Endothelial cell of umbilical vein (primary cell): ENCODE measurements at regions of chr16 and their contacts with region 1.

Region 1: GRCh38 chr16:30429678-30430427 is at the start of gene DCTPP1:
- DNase-seq: peak; percentile 97
- H3K4me3 ChIP-seq: peak within 1 kb of the TSS; percentile 40 to 73 (median 63)
- H3K27ac ChIP-seq: peak within 1 kb of the TSS; percentile 38
- H3K4me1 ChIP-seq: peaks cover 23% of the 10 kb centered on the region
- H3K27me3 ChIP-seq: peaks cover 0 to 4% of the 10 kb centered on the region in 2 experiments
- CTCF ChIP-seq: peak; percentile 66 to 78
- POLR2A ChIP-seq: peak; percentile 25
- total RNA-seq, gene DCTPP1: 65.2 and 68.0 TPM in 2 replicates

Region 2: DNA sequence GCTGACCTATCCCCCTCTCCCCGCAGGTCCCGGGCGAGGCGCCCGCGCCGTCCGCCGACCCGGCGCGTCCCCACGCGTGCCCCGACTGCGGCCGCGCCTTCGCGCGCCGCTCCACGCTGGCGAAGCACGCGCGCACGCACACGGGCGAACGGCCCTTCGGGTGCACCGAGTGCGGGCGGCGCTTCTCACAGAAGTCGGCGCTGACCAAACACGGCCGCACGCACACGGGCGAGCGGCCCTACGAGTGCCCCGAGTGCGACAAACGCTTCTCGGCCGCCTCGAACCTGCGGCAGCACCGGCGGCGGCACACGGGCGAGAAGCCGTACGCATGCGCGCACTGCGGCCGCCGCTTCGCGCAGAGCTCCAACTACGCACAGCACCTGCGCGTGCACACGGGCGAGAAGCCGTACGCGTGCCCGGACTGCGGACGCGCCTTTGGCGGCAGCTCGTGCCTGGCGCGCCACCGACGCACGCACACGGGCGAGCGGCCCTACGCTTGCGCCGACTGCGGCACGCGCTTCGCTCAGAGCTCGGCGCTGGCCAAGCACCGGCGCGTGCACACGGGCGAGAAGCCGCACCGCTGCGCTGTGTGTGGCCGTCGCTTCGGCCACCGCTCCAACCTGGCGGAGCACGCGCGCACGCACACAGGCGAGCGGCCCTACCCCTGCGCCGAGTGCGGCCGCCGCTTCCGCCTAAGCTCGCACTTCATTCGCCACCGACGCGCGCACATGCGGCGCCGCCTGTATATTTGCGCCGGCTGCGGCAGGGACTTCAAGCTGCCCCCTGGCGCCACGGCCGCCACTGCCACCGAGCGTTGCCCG is 12.1 kb before region 1 on chr16:
- CTCF ChIA-PET with region 1: interaction called, 46 read pairs
- POLR2A ChIA-PET with region 1: interaction called, 12 read pairs
- dilution Hi-C with region 1: no loop called
- intact Hi-C with region 1: no loop called
- DNase-seq: peak; percentile 96
- H3K4me3 ChIP-seq: peak overlapping the region in 2 of 3 experiments; percentile 44 to 57
- H3K27ac ChIP-seq: no peak overlapping the region
- H3K4me1 ChIP-seq: peaks cover 3% of the 10 kb centered on the region
- H3K27me3 ChIP-seq: no peaks in the 10 kb centered on the region
- CTCF ChIP-seq: peak in 1 of 2 donors; percentile 37
- POLR2A ChIP-seq: peak; percentile 42

Region 3: DNA sequence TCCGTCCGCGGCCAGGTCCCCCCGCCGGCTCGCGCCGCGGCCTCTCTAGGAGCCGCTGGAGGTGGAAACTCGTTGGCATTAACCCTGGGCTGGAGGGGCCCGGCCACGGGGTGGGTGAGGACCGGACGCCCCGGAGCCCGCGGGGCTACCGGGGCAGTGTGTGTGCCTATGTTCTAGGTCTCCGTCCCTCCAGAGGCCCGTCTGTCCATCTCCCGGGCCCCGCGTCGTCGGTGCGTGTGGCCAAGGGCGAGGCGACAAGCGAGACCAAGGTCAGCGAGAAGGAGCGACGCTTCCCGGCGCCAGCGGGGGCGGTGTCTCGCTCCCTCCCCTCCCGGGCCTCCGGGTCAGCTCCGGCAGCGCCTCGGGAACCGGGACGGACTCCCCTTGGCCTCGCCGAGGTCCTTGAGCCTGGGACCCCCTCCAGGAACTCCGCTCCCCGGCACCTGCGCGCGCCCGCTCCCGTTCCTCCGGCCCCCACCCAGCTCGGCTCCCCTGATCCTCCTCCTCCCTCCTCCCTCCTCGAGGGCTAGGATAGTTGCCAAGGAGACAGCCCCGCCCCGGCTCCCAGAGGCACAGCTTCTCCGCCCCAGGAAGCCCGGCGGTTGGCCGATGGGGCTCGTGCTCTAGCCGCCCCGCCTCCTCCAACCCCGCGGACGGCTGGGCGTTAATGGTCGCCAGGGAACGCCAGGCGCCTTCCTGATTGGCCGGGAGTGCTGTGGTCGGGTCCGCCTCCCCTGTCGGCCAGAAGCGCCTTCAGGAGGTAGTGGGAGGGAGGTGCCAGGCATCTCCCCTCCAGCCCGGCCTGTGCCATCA is 97.2 kb after region 1 on chr16:
- CTCF ChIA-PET with region 1: interaction called, 8 read pairs
- POLR2A ChIA-PET with region 1: no interaction called
- dilution Hi-C with region 1: no loop called
- intact Hi-C with region 1: loop called (anchors 1 kb)
- DNase-seq: peak; percentile 98
- H3K4me3 ChIP-seq: peak overlapping the region; percentile 58 to 67 (median 65)
- H3K27ac ChIP-seq: peak overlapping the region; percentile 80
- H3K4me1 ChIP-seq: peaks cover 4% of the 10 kb centered on the region
- H3K27me3 ChIP-seq: no peaks in the 10 kb centered on the region
- CTCF ChIP-seq: peak; percentile 13 to 56
- POLR2A ChIP-seq: peak; percentile 58

Region 4: GRCh38 chr16:30557957-30558788 is 128.3 kb after region 1 on chr16 and contains the start of gene ZNF764:
- CTCF ChIA-PET with region 1: interaction called, 11 read pairs
- POLR2A ChIA-PET with region 1: interaction called, 4 read pairs
- dilution Hi-C with region 1: no loop called
- intact Hi-C with region 1: no loop called
- DNase-seq: peak; percentile 98
- H3K4me3 ChIP-seq: peak within 1 kb of the TSS; percentile 67 to 89 (median 75)
- H3K27ac ChIP-seq: peak within 1 kb of the TSS; percentile 83
- H3K4me1 ChIP-seq: peaks cover 12% of the 10 kb centered on the region
- H3K27me3 ChIP-seq: no peaks in the 10 kb centered on the region
- CTCF ChIP-seq: no peak
- POLR2A ChIP-seq: peak; percentile 93
- total RNA-seq, gene ZNF764: 10.7 and 12.1 TPM in 2 replicates

Region 5: DNA sequence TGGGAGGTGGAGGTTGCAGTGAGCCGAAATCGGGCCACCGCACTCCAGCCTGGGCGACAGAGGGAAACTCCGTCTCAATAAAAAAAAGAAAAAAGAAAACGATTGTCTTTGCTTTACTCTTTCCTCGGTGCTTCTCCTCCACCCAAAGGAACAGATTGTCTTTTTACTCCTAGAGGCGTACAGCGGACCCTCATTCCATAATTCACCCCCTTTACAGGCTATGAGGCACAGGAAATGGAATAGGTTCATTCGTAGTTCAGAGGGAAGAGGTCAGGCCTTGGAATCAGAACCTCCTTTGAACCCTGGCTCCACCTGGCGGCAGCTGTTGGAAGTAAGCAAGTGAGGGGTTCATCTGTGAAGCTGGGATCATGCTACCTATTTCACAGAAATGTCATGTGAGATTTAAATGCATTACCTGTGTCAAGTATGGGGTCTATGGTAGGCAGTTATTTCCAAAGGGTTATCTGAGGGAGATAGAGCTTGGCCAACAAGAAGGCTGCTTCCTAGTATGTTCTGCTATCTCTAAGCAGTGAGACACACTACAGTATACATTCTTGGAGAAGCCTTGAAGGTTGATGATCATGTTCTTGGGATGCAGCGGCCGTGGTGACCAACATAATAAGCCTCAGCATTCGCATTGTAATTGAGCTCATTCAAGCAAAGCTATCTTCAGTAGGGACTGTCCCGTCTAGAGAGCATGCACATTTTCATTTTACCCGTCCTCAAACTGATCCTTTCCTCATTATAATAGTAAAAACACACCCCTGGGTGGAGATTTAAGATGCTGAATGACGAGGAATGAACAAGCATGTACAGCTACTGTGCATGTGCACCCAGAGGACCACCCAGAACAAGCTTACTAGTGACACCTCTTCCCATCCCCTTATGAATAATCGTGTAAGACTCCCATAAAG is 199.0 kb after region 1 on chr16:
- CTCF ChIA-PET with region 1: interaction called, 9 read pairs
- POLR2A ChIA-PET with region 1: no interaction called
- dilution Hi-C with region 1: no loop called
- intact Hi-C with region 1: loop called (anchors 1 kb)
- DNase-seq: peak; percentile 77
- H3K4me3 ChIP-seq: peak overlapping the region in 1 of 3 experiments; percentile 27
- H3K27ac ChIP-seq: no peak overlapping the region
- H3K4me1 ChIP-seq: peaks cover 3% of the 10 kb centered on the region
- H3K27me3 ChIP-seq: peaks cover 2% of the 10 kb centered on the region in 2 experiments
- CTCF ChIP-seq: peak; percentile 85 to 91
- POLR2A ChIP-seq: no peak

Region 6: DNA sequence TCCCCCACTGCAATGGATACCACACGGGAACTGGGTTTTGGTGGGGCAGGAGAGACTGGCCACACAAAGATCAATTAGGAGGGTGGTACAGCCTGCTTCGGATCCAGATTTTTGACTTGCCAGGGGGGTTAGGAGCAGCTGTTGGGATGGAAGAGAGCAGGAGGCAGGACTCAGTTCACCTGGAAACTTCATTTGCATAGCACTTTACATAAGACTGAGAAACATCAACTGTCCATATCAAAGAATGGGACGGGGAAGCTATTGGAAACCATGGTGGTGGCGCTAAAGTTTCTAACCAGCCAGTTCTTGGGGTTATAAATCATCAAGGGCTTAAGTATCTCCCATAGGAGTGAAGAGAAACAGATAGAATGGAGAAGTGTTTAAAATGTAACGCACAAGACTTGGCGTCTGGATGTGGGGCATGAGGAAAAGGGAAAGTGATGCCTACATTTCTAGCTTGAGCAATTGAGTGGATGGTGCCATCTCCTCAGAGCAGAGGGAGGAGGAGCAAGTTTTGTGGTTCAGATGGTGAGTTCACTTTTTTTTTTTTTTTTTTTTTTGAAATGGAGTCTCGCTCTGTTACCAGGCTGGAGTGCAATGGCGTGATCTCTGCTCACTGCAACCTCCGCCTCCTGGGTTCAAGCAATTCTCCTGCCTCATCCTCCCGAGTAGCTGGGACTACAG is 262.7 kb after region 1 on chr16:
- CTCF ChIA-PET with region 1: interaction called, 3 read pairs
- POLR2A ChIA-PET with region 1: no interaction called
- dilution Hi-C with region 1: no loop called
- intact Hi-C with region 1: loop called (anchors 2 kb)
- DNase-seq: no peak
- H3K4me3 ChIP-seq: no peak overlapping the region
- H3K27ac ChIP-seq: no peak overlapping the region
- H3K4me1 ChIP-seq: peaks cover 8% of the 10 kb centered on the region
- H3K27me3 ChIP-seq: peaks cover 0 to 3% of the 10 kb centered on the region in 2 experiments
- CTCF ChIP-seq: no peak
- POLR2A ChIP-seq: no peak